ENCODE measurements at regions of chr5 and their contacts with region 1.

Region 1: GRCh38 chr5:169980418-169981053 is at the start of gene INSYN2B:
- DNase-seq: peak; percentile 97
- total RNA-seq, gene INSYN2B: 0.78 and 4.9 TPM in 2 replicates

Region 2: GRCh38 chr5:169695919-169696490 is 284.5 kb before region 1 on chr5:
- in situ Hi-C with region 1: loop called (anchors 5 kb)
- DNase-seq: peak; percentile 99

Measured in Caki2 (cell line).